ENCODE measurements at regions of chr5 and their contacts with region 1.

Region 1: DNA sequence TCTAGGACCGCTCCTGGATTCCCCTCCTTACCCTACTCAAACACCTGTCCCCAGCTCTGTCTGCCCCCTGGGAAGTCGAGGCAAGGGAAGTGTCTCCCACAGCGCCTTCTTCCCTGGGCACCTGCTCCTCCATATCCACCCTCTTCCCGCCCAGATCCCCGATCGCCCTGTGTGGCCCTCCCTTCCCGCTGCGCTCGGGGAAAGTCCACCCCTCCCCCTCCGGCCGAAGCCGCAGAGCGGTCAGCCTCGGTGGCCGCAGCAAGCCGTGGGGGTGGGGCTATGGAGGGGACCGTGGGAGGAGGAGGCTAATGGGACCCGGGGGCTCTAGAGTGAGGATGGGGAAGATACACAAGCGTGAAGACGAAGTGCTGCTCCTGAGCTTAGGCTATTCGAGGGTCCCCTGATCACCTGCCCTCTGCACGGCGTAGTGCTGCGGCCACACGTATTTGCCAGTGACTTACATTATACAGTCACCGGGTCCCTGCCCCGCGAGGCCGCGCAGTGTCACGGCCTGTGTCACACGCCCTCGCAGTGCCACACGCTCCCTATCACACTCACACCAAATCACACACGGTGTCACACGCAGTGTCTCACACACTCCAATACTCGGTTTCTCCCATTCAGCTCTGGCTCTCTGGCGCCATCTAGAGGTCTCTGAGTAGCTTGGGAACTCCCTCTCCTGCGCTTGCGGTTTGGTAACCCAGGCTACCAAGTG is 658 bp upstream of the PCDH1 start:
- H3K4me3 ChIP-seq: peak overlapping the region; percentile 30
- H3K27ac ChIP-seq: peak overlapping the region; percentile 7; the same call in 1 of the 2 replicates
- H3K4me1 ChIP-seq: peaks cover 8% of the 10 kb centered on the region
- CTCF ChIP-seq: peak; percentile 96

Region 2: GRCh38 chr5:141605523-141606277 is 273.2 kb before region 1 on chr5:
- CTCF ChIA-PET with region 1: no interaction called
- POLR2A ChIA-PET with region 1: no interaction called
- H3K4me3 ChIP-seq: no peak overlapping the region
- H3K27ac ChIP-seq: no peak overlapping the region
- H3K4me1 ChIP-seq: 0 out of 2 replicates have a peak, but pooled peaks cover 4% of the 10 kb centered on the region
- CTCF ChIP-seq: no peak

Region 3: DNA sequence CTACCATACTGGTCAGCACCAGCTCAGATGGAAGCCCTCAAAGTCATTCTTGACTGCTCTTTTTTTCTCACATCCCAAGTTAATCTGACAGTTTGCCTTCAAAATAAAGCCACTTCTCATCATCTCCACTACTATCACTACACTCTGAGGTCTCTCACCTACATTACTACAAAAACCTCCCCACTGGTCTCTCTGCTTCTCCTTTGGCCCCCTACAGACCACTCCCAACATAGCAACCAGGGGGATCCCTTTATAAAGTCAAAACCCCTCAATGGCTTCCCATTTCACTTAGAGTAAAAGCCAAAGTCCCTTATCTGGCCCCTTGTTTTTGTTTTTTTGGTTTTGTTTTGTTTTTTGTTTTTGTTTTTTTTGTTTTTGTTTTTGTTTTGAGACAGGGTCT is 201.5 kb before region 1 on chr5:
- CTCF ChIA-PET with region 1: no interaction called
- POLR2A ChIA-PET with region 1: no interaction called
- H3K4me3 ChIP-seq: no peak overlapping the region
- H3K27ac ChIP-seq: no peak overlapping the region
- H3K4me1 ChIP-seq: no peaks in the 10 kb centered on the region
- CTCF ChIP-seq: no peak

Region 4: DNA sequence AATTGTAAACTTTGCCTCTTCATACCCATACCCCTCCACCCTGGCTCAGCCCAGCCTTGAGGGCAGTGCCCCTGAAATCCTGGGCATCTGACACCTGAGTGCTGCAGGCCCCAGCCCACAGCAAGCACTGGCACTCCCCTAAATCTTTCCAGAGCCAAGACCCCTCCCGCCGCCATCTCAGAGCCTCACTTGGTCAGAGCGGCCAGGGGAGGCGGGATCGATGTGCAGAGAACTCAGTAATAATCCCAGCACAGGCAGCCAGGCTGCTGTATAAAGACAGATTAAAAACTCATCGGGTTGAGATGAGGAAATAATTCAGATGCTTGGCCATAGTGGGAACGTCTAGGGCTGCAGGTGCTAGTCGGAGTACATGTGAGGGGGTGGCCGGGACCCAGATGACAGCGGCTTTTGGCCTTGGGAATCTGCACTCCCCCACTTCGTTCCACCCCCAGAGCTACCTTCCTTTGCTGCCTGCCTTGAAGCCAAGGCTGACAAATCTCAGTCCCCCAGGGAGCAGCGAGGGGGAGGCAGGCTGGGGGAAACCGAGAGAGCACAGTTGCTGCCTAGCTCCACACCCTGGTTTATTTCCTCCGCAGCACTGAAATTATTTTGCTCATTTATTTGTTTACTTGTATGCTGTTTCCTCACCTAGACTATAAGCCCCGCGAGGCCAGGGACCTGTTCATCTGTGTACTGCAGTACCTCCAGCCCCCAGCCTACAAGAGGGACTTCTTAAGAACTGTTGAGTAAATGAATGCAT is 177.3 kb before region 1 on chr5:
- CTCF ChIA-PET with region 1: interaction called, 104 read pairs
- POLR2A ChIA-PET with region 1: no interaction called
- H3K4me3 ChIP-seq: no peak overlapping the region
- H3K27ac ChIP-seq: no peak overlapping the region
- H3K4me1 ChIP-seq: no peaks in the 10 kb centered on the region; the same call in 1 of the 2 replicates
- CTCF ChIP-seq: no peak

Region 5: DNA sequence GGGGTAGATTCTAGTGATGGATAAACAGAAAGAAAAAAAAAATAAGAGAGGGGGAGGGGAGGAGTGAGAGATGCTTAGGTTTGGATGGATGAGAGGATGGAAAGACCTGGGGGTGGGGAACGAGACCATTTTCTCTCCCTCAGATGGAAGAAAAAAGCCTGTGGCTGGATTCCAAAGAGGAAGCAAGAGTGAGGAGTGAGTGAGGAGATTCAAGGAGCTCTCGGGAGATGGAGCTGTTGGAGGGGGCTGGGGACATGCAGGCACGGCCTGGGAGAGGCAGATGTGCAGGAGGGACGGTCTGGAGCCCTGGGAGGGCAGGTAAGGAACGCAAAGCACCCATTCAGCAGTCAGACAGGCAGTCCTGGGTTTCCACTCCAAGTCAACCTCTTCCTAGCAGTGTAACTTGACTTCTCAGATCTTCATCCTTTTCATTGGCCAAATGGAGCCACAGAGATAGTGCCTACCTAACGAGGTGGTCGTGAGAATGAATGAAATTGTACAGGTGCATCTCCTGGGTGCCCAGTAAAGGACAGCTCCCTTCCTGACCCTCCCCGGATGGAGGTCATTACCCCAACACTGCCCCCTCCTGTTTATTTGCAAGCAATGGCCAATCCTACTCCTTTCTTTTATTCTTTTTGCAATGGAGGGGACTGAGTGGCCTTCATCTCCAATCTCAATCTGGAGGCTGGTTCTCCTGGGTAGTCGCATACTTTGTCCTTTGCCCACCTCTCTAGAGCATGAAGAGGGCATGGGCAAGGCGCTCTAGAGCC is 52.9 kb before region 1 on chr5:
- CTCF ChIA-PET with region 1: interaction called, 16 read pairs
- POLR2A ChIA-PET with region 1: no interaction called
- H3K4me3 ChIP-seq: no peak overlapping the region
- H3K27ac ChIP-seq: no peak overlapping the region
- H3K4me1 ChIP-seq: no peaks in the 10 kb centered on the region
- CTCF ChIP-seq: 0 out of 2 replicates have a peak, but pooled peaks have one; percentile 27

Region 6: GRCh38 chr5:141849375-141850243 is 29.3 kb before region 1 on chr5:
- CTCF ChIA-PET with region 1: interaction called, 18 read pairs
- POLR2A ChIA-PET with region 1: interaction called, 13 read pairs
- H3K4me3 ChIP-seq: peak overlapping the region; percentile 66
- H3K27ac ChIP-seq: peak overlapping the region; percentile 84
- H3K4me1 ChIP-seq: peaks cover 7% of the 10 kb centered on the region
- CTCF ChIP-seq: peak; percentile 32; the same call in 1 of the 2 replicates

Region 7: DNA sequence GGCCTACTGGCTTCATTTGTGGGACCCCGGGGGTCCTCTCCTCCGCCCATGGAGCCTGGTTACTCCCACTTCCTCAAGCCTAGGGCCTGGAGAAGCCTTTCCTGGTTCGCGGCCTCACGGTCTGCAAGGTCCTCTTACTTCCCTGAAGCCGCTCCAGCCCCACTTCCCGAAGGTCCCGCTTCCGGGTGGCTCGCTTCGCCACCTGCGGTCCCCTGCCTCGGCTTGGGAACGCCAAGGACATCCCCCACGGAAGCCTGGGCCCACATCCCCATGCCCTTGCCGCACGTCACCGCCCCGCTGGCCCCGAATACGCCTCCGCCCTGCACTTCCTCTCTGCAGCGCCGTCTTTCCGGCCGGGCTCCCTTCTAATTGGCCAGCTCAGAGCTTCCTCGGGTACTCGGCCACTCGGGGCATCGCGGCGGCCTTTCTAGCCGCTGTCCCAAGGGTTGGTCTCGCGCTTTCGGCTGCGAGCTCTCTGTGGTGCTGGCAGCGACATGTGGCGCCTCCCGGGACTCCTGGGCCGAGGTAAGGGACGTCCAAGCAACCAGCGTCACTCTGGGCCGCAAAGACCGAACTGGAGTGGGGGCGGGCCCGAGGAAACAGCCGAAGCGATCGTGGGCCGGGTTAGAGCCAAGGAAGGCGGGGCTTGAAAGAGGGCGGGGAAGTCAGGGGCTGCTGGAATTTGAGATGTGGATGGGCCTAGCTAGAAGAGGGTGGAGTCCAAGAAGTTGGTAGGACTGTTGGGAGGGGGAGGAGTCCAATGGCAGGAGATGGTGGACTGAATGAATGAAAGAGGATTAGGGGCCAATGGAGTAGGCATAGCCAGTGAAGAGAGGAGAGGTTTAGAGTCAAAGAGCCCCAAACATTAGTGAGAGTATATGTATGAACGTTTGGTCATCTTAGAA is 44.8 kb after region 1 on chr5 and contains the start of gene DELE1:
- CTCF ChIA-PET with region 1: interaction called, 8 read pairs
- POLR2A ChIA-PET with region 1: interaction called, 11 read pairs
- H3K4me3 ChIP-seq: peak within 1 kb of the TSS; percentile 94
- H3K27ac ChIP-seq: peak within 1 kb of the TSS; percentile 80
- H3K4me1 ChIP-seq: no peaks in the 10 kb centered on the region
- CTCF ChIP-seq: no peak

Region 8: DNA sequence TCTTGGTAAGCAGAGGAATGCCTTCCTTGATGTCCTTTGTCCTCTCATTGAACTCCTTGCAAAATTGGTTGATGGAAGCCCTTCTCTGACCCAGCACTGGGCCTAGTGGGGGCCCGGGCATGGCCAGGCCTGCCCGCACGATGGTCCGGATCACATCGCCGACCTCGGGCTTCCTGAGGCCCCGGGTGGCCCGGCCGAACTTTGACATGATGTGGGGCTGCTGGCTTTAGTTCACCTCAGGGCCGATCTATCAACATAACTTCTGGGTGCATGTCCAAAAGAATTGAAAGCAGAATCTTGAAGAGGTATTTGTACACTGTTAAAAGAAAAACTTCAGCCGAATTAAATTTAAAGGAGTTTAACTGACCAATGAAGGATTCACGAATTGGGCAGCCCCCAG is 158.1 kb after region 1 on chr5:
- CTCF ChIA-PET with region 1: no interaction called
- POLR2A ChIA-PET with region 1: no interaction called
- H3K4me3 ChIP-seq: no peak overlapping the region
- H3K27ac ChIP-seq: no peak overlapping the region
- H3K4me1 ChIP-seq: no peaks in the 10 kb centered on the region; the same call in 1 of the 2 replicates
- CTCF ChIP-seq: no peak